ENCODE measurements at regions of chr5 and their contacts with region 1.

Region 1: GRCh38 chr5:157130925-157131324 is 11.7 kb downstream of the MED7 start:
- DNase-seq: no peak
- ATAC-seq: no peak
- H3K4me3 ChIP-seq: no peak overlapping the region
- H3K4me3 Mint-ChIP-seq: no peak overlapping the region
- H3K27ac ChIP-seq: no peak overlapping the region
- H3K27ac Mint-ChIP-seq: no peak overlapping the region
- H3K4me1 ChIP-seq: peaks cover 8% of the 10 kb centered on the region
- H3K4me1 Mint-ChIP-seq: peaks cover 33% of the 10 kb centered on the region
- H3K27me3 ChIP-seq: no peaks in the 10 kb centered on the region
- H3K27me3 Mint-ChIP-seq: no peaks in the 10 kb centered on the region
- CTCF ChIP-seq: no peak

Region 2: DNA sequence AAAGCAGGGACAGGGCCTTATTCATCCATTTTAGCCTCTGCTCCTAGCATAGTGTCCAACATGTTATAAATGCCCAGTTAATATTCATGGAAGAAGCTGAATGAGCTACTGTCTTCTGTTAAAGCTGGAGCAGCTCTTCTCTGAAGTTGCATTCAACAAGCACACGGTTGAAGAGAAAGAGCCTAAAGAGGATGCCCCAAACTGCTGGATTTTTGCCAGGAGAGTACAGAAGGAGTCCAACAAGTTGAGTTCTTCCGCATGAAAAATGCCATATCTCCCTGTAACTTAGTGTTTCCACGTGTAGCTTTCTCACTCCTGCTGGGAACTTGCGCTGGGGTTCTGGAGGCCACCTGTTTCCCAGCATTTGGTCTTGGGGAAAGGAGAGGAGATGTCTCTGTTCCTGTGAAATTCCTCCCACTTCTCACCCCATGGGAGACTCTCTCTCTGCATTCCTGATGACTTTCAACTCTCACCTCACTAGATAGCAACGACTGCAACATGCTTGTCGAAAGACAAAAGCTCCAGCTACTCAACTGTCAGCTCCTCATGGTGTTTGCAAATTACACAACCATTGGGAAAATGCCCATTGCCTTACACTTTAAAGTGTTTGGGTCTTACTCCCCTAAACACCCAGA is 1994.6 kb before region 1 on chr5:
- CTCF ChIA-PET with region 1: no interaction called
- POLR2A ChIA-PET with region 1: no interaction called
- intact Hi-C with region 1: loop called (anchors 5 kb)
- DNase-seq: no peak
- ATAC-seq: no peak
- H3K4me3 ChIP-seq: no peak overlapping the region
- H3K4me3 Mint-ChIP-seq: no peak overlapping the region
- H3K27ac ChIP-seq: no peak overlapping the region
- H3K27ac Mint-ChIP-seq: no peak overlapping the region
- H3K4me1 ChIP-seq: no peaks in the 10 kb centered on the region
- H3K4me1 Mint-ChIP-seq: no peaks in the 10 kb centered on the region
- H3K27me3 ChIP-seq: peaks cover 2 to 4% of the 10 kb centered on the region in 2 experiments
- H3K27me3 Mint-ChIP-seq: peaks cover 55% of the 10 kb centered on the region
- CTCF ChIP-seq: no peak

Region 3: GRCh38 chr5:155616779-155617392 is 1514.0 kb before region 1 on chr5:
- CTCF ChIA-PET with region 1: no interaction called
- POLR2A ChIA-PET with region 1: no interaction called
- intact Hi-C with region 1: loop called in 1 of 2 experiments (anchors 5 kb)
- DNase-seq: peak in 11 of 14 experiments; percentile 2 to 38 (median 27)
- ATAC-seq: no peak
- H3K4me3 ChIP-seq: no peak overlapping the region
- H3K4me3 Mint-ChIP-seq: no peak overlapping the region
- H3K27ac ChIP-seq: no peak overlapping the region
- H3K27ac Mint-ChIP-seq: no peak overlapping the region
- H3K4me1 ChIP-seq: no peaks in the 10 kb centered on the region
- H3K4me1 Mint-ChIP-seq: no peaks in the 10 kb centered on the region
- H3K27me3 ChIP-seq: no peaks in the 10 kb centered on the region
- H3K27me3 Mint-ChIP-seq: peaks cover 22% of the 10 kb centered on the region
- CTCF ChIP-seq: peak; percentile 24

Region 4: DNA sequence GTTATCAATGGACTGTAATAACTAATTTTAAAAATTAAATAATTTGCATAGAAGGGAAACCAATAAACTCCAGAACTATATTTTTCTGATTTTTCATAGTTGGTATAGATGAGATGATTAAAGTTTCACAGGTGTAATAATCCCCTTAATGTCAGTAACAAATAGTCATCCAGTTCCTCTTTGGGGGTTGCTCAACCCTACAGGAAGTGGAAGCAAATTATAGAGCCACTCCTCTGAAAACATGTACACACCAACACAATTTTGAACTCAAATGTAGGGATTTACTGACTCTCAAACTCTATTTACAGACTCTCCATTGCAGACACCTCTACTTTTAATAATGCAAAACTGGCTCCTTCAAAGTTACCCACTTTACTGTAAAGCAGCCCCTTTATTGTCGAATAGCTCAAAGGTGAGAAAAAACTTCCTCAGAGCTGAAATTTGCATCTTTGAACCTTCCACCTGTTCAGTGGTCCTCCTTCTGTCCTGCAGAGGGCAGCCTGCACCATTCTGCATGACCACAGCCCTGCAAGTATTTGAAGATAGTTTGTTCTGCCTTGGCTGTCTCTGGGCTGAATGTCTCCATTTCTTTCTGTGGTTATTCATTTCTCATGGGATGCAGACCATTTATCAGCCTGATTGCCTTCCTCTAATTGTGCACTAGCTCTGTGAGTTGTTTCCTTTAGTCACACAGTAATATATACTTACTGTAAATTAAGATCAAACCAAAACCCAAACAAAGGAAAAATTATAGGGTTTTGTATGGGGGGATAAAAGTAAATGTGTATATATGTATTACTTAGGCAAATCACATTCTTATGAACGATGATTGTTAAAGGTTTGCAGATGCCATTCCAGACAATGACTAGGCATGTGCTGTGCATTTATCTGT is 1187.2 kb before region 1 on chr5:
- CTCF ChIA-PET with region 1: interaction called, 3 read pairs
- POLR2A ChIA-PET with region 1: no interaction called
- intact Hi-C with region 1: loop called (anchors 2 to 5 kb)
- DNase-seq: peak in 10 of 14 experiments; percentile 1 to 54 (median 17)
- ATAC-seq: peak; percentile 46
- H3K4me3 ChIP-seq: no peak overlapping the region
- H3K4me3 Mint-ChIP-seq: no peak overlapping the region
- H3K27ac ChIP-seq: no peak overlapping the region
- H3K27ac Mint-ChIP-seq: no peak overlapping the region
- H3K4me1 ChIP-seq: no peaks in the 10 kb centered on the region
- H3K4me1 Mint-ChIP-seq: no peaks in the 10 kb centered on the region
- H3K27me3 ChIP-seq: no peaks in the 10 kb centered on the region
- H3K27me3 Mint-ChIP-seq: peaks cover 21% of the 10 kb centered on the region
- CTCF ChIP-seq: peak; percentile 56

Region 5: DNA sequence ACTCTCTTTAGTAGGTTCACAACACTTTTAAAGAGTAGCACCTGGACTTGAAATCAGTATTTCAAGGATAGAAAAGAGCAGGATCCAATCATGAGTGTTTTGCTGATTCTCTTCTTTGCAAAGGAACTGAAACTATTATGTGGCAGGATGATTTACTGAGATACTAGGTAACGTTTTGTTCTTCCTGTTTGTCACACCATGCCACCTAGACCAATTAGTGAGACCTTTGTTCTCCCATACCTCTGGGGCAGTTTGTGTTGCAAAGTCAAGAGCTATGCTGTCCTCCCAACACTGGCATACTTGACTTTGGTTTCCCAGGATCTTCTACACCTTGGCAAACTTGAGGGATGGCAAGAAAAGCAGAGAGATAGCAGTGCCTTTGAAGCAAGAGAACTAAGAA is 237.4 kb before region 1 on chr5:
- CTCF ChIA-PET with region 1: no interaction called
- POLR2A ChIA-PET with region 1: no interaction called
- intact Hi-C with region 1: loop called in 1 of 2 experiments (anchors 5 kb)
- DNase-seq: no peak
- ATAC-seq: no peak
- H3K4me3 ChIP-seq: no peak overlapping the region
- H3K4me3 Mint-ChIP-seq: no peak overlapping the region
- H3K27ac ChIP-seq: no peak overlapping the region
- H3K27ac Mint-ChIP-seq: no peak overlapping the region
- H3K4me1 ChIP-seq: peaks cover 2% of the 10 kb centered on the region
- H3K4me1 Mint-ChIP-seq: peaks cover 19% of the 10 kb centered on the region
- H3K27me3 ChIP-seq: no peaks in the 10 kb centered on the region
- H3K27me3 Mint-ChIP-seq: no peaks in the 10 kb centered on the region
- CTCF ChIP-seq: no peak

Region 6: DNA sequence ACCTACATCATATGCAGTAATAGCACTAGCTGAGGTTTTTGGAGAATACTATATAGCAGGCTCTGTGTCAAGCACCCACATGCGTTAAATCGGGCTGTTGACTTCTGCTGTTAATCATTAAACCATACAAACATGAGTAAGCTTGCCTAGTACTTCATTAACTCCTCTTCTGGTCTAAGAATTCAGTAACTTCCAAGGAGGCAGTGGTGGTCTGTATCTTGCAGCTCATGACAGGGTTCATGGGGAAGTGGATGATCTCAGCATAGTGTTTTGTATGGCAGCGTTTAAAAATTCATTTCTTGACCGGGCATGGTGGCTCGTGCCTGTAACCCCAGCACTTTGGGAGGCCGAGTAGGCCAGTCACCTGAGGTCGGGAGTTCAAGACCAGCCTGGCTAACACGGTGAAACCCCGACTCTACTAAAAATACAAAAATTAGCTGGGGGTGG is 71.8 kb before region 1 on chr5 and contains the start of gene HAVCR1:
- CTCF ChIA-PET with region 1: no interaction called
- POLR2A ChIA-PET with region 1: no interaction called
- intact Hi-C with region 1: no loop called
- DNase-seq: no peak
- ATAC-seq: no peak
- H3K4me3 ChIP-seq: no peak within 1 kb of the TSS
- H3K4me3 Mint-ChIP-seq: no peak within 1 kb of the TSS
- H3K27ac ChIP-seq: no peak within 1 kb of the TSS
- H3K27ac Mint-ChIP-seq: no peak within 1 kb of the TSS
- H3K4me1 ChIP-seq: no peaks in the 10 kb centered on the region
- H3K4me1 Mint-ChIP-seq: no peaks in the 10 kb centered on the region
- H3K27me3 ChIP-seq: no peaks in the 10 kb centered on the region
- H3K27me3 Mint-ChIP-seq: no peaks in the 10 kb centered on the region
- CTCF ChIP-seq: no peak
- total RNA-seq, gene HAVCR1: 1.5 to 1.7 TPM

Region 7: DNA sequence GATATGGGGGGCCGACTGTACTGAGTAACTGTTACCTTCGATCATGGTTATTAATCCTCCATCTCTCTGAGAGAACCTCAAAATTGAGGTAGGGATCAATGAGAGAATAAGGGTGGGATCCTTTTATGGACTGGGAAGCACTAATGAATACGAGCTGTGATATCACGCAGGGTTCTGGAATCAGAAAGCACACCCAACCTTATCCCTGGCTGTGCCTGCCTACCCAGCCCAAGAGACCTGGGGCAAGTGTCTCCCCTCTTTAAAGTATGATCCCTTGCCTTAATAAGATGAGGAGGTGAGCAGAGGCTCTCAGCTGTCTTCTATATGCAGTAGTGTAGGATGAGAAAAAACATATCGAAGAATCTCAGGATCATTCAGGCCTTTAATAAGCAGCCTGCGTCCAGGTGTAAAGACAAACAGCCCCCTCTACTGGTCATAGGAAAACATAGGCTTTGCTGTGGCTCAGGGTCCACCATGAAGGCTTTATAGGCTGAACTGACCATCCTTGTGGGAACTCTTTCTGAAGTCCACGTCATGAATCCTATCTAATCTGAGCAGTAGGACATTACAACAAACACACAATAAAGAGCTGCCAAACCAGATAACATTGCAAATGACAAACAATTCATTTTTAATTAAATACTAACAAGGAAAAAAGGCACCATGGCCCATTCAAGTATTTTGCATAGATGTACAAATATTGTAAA is 345.9 kb after region 1 on chr5:
- CTCF ChIA-PET with region 1: no interaction called
- POLR2A ChIA-PET with region 1: no interaction called
- intact Hi-C with region 1: loop called in 1 of 2 experiments (anchors 10 kb)
- DNase-seq: peak in 3 of 14 experiments; percentile 50 to 65 (median 62)
- ATAC-seq: no peak
- H3K4me3 ChIP-seq: no peak overlapping the region
- H3K4me3 Mint-ChIP-seq: no peak overlapping the region
- H3K27ac ChIP-seq: no peak overlapping the region
- H3K27ac Mint-ChIP-seq: no peak overlapping the region
- H3K4me1 ChIP-seq: peaks cover 30% of the 10 kb centered on the region
- H3K4me1 Mint-ChIP-seq: no peaks in the 10 kb centered on the region
- H3K27me3 ChIP-seq: no peaks in the 10 kb centered on the region
- H3K27me3 Mint-ChIP-seq: no peaks in the 10 kb centered on the region
- CTCF ChIP-seq: peak; percentile 67

Measured in CD4-positive, alpha-beta T cell (primary cell).